ENCODE measurements at regions of chr11 and their contacts with region 1.

Region 1: DNA sequence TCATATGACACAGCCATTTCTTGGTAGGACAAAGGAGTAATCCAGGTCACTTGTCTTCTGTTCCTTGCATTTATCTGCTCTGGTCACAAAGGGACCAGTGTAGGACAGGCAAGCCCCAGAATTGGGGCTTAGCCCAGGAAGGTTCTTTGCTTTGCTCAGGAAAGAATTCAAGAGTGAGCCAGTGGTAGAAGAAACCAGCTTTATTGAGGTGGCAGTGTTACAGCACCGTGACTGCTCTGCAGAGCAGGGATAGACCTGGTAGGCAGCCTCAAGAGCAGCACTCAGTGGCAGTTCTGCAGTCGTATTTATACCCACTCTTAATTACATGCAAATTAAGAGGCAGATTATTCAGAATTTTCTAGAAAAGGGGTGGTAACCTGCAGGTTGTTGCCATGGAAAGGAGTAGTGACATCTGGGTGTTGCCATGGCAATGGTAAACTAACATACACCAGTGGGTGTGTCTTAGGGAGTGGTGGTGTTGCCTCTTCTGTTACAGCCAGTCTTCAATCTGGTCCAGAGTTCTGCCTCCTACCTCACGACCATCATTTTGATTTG is 84.9 kb upstream of the RAB1B start:
- DNase-seq: no peak
- H3K4me3 ChIP-seq: no peak overlapping the region
- H3K27ac ChIP-seq: no peak overlapping the region
- H3K4me1 ChIP-seq: no peaks in the 10 kb centered on the region
- H3K27me3 ChIP-seq: no peaks in the 10 kb centered on the region
- CTCF ChIP-seq: no peak
- EP300 ChIP-seq: no peak
- POLR2A ChIP-seq: no peak

Region 2: GRCh38 chr11:66195867-66196266 is 12.3 kb after region 1 on chr11:
- intact Hi-C with region 1: loop called in 1 of 4 experiments (anchors 2 kb)
- DNase-seq: no peak
- H3K4me3 ChIP-seq: no peak overlapping the region
- H3K27ac ChIP-seq: no peak overlapping the region
- H3K4me1 ChIP-seq: no peaks in the 10 kb centered on the region
- H3K27me3 ChIP-seq: no peaks in the 10 kb centered on the region
- CTCF ChIP-seq: no peak
- EP300 ChIP-seq: no peak
- POLR2A ChIP-seq: no peak

Region 3: GRCh38 chr11:66258473-66258893 is 74.9 kb after region 1 on chr11:
- intact Hi-C with region 1: no loop called
- DNase-seq: no peak
- H3K4me3 ChIP-seq: peak overlapping the region; percentile 93
- H3K27ac ChIP-seq: peak overlapping the region; percentile 62 to 81
- H3K4me1 ChIP-seq: peaks cover 9% of the 10 kb centered on the region
- H3K27me3 ChIP-seq: no peaks in the 10 kb centered on the region
- CTCF ChIP-seq: no peak
- EP300 ChIP-seq: no peak
- POLR2A ChIP-seq: no peak

Measured in ovary (tissue), 10 donors.